ENCODE measurements at regions of chr1 and their contacts with region 1.

Region 1: GRCh38 chr1:55943721-55944435 is 635.5 kb downstream of the PLPP3 start:
- DNase-seq: no peak
- H3K4me3 ChIP-seq: no peak overlapping the region
- H3K27ac ChIP-seq: no peak overlapping the region
- H3K4me1 ChIP-seq: no peaks in the 10 kb centered on the region
- H3K27me3 ChIP-seq: peaks cover under 1% of the 10 kb centered on the region
- CTCF ChIP-seq: no peak

Region 2: DNA sequence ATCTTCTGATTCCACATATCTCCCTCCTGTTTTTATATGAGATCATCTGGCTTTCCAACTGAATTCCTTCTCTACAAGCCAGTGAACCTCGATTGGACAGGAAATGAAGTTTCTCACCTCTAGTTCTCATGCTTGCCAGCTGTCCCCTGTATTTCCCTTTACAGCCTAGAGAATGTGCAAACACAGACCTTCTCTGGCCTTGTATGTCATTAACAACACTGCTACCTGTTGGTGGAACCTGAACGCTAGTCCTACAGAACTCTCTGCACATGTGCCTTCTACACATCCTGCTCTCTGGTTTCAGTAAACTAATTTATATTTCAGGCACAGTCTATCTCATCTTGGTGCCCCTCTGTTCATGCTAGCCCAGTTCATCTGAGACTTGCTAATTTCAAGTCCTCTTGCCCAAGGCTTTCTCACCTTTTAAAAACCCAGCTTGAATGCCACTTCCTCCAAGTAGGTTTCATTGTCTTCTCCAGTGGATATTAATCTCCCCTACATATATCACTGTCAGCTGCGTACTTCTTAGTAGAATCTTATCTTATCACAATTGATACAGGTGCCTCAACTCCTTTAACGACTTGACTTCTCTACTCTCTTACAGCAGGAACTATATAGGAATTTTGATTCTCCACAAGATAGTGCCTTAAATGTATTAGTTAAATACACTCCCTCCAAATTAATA is 85.6 kb after region 1 on chr1:
- CTCF ChIA-PET with region 1: no interaction called
- dilution Hi-C with region 1: loop called (anchors 5 kb)
- in situ Hi-C with region 1: no loop called
- intact Hi-C with region 1: no loop called
- DNase-seq: no peak
- H3K4me3 ChIP-seq: no peak overlapping the region
- H3K27ac ChIP-seq: no peak overlapping the region
- H3K4me1 ChIP-seq: no peaks in the 10 kb centered on the region
- H3K27me3 ChIP-seq: no peaks in the 10 kb centered on the region
- CTCF ChIP-seq: peak in 1 of 2 donors; percentile 4

Measured in mammary epithelial cell (primary cell).